ENCODE measurements at regions of chr2 and their contacts with region 1.

Region 1: DNA sequence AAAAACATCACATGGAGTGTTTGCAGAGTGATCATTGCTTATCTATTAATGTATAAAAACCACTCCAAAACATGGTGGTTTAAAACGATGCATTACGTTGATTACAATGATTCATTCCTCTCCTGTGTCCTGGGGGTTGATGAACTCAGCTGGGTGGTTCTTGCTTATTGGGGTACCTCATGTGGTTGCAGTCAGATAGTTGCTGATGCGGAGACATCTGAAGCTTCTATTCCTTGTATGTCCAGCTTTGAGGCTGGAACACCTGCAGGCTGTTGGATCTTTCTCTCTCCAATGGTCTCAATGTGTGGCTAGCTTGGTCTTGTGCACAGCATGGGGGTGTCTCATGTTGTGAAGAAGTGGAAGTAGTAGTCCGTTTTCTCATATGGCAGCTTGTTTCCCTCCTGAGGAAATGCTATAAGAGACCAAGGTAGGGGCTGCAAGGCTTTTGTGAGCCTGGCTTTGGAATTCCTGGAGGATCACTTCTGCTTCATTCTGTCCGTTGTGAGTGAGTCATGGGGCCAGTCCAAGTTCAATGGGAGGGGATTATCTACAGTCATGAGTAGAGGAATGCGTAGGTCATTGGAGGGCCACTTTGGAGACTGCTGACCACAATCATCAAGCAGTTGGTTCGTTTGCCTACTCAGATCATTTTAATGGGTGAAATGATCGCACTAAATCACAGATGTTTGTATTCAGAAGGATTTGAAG is 601.0 kb downstream of the SLC4A3 start:
- DNase-seq: peak; percentile 80 to 97
- H3K4me3 ChIP-seq: peak overlapping the region; percentile 45
- H3K27ac ChIP-seq: peak overlapping the region; percentile 90
- H3K4me1 ChIP-seq: peaks cover 67% of the 10 kb centered on the region
- H3K27me3 ChIP-seq: no peaks in the 10 kb centered on the region
- CTCF ChIP-seq: no peak

Region 2: DNA sequence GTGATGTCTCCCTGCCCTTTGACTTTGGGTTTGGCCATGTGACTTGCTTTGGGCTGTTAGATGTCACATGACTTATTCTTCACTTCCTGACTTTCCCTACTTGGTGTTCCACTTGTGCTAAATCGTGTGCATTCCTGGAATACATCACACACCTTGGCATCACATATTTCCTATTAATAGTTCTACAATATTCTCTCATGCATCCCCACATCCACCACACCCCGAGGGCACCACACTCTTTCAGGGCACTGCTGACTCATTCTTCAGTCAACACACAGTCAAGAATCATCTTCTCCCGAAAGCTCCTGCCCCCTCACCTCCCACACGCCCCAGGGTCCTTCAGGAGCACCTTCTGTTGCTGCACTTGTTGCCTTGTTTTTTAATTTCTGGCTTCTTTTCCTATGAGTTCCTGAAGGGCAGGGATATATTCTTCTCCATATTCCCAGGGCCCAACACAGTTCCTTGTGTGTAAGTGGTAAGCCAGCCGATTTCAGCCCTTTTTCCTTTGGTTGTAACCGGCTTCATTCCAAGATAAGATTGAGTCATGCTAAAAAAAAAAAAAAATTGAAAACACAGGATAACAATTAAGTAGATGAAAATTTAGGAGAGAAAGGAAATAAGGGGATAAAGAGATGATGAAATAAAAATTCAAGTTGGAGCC is 259.6 kb before region 1 on chr2:
- CTCF ChIA-PET with region 1: no interaction called
- POLR2A ChIA-PET with region 1: no interaction called
- intact Hi-C with region 1: loop called (anchors 1 kb)
- DNase-seq: peak; percentile 86 to 89
- H3K4me3 ChIP-seq: no peak overlapping the region
- H3K27ac ChIP-seq: peak overlapping the region; percentile 86
- H3K4me1 ChIP-seq: peaks cover 35% of the 10 kb centered on the region
- H3K27me3 ChIP-seq: no peaks in the 10 kb centered on the region
- CTCF ChIP-seq: no peak

Region 3: DNA sequence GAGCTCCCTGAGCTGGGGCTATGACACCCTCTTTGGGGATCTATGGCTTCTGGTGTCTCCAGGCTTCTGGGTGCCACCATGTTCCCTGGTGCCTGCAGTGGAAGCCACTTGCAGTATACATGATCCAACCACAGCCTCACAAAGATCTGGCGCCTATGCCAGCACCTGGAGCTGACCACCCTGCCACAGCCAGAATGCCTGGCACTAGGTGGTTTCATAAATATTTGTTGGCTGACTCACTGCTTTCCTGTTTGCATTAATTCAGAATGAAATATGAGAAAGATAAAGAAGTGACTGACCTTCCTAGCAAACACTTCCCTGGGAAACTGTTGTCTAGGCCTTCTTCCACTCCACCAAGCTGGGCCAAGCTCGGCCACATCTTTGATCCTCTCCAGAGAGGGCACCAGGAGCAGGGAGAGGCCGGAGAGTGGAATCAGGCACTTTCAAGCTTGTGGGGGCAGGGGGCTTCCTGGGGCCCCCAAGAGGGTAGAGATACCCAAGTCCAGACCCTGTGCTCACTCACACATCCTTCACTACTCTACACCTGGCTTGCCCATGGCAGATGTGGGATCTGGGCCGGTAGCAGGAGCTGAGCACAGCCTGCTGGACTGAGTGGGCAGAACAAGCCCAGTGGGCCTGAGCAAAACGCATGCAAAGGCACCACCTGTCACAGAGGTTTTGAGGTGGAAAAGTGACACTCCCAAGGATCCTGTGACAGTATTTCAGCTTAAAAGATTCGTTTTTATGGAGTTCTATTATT is 35.3 kb before region 1 on chr2:
- CTCF ChIA-PET with region 1: no interaction called
- POLR2A ChIA-PET with region 1: no interaction called
- intact Hi-C with region 1: loop called (anchors 2 kb)
- DNase-seq: peak; percentile 70 to 82
- H3K4me3 ChIP-seq: no peak overlapping the region
- H3K27ac ChIP-seq: peak overlapping the region; percentile 60
- H3K4me1 ChIP-seq: peaks cover 21% of the 10 kb centered on the region
- H3K27me3 ChIP-seq: no peaks in the 10 kb centered on the region
- CTCF ChIP-seq: no peak

Region 4: DNA sequence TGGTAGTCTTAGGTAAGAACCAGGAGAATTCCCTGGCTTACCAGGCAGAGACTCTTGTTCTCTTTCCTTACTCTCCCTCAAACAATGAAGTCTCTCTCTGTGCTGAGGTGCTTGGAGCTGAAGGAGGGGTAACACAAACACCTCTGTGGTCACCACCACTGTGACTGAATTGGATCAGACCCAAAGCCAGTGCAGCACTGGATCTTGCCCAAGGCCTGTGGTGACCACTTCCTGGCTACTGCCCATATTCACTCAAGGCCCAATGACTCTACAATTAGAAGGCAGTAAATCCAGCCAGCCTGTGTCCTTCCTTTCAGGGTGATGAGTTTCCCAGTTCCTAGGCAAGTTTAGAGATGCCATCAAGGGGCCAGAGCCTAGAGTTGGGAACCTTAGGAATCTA is 105.8 kb after region 1 on chr2:
- CTCF ChIA-PET with region 1: no interaction called
- POLR2A ChIA-PET with region 1: no interaction called
- intact Hi-C with region 1: loop called (anchors 2 kb)
- DNase-seq: peak in 1 of 2 experiments; percentile 50
- H3K4me3 ChIP-seq: no peak overlapping the region
- H3K27ac ChIP-seq: no peak overlapping the region
- H3K4me1 ChIP-seq: peaks cover 24% of the 10 kb centered on the region
- H3K27me3 ChIP-seq: no peaks in the 10 kb centered on the region
- CTCF ChIP-seq: no peak

Region 5: GRCh38 chr2:220478305-220479083 is 250.0 kb after region 1 on chr2:
- CTCF ChIA-PET with region 1: no interaction called
- POLR2A ChIA-PET with region 1: no interaction called
- intact Hi-C with region 1: no loop called
- DNase-seq: peak; percentile 1 to 84
- H3K4me3 ChIP-seq: no peak overlapping the region
- H3K27ac ChIP-seq: peak overlapping the region; percentile 33
- H3K4me1 ChIP-seq: peaks cover 16% of the 10 kb centered on the region
- H3K27me3 ChIP-seq: no peaks in the 10 kb centered on the region
- CTCF ChIP-seq: no peak

Region 6: DNA sequence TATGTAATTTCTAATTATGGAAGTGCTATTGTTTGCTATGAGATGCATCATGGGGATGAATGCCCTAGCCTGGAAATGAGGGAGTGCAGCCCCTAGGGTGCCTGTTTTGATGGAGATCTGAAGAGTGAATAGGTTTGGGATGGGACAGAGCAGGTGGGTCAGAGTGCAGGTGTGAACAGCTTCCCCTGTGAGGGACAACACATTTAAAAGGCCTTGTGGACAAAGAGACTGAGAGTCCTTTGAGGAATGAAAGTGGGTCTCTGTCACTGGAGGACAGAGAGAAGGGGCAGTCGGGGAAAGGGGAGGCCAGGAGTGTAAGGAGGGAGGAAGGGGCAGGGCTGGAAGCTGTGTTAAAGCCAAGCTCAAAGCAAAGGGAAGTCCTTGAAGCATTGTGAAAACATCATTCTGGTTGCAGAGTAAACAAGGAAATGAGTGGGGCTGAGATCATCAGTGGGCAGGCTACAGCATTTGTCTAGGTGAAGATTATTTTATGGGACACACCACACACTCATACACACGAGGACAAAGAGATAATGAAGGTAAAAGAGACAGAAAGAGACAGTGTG is 276.6 kb after region 1 on chr2:
- CTCF ChIA-PET with region 1: no interaction called
- POLR2A ChIA-PET with region 1: no interaction called
- intact Hi-C with region 1: loop called (anchors 2 kb)
- DNase-seq: peak; percentile 17 to 72
- H3K4me3 ChIP-seq: no peak overlapping the region
- H3K27ac ChIP-seq: peak overlapping the region; percentile 53
- H3K4me1 ChIP-seq: peaks cover 14% of the 10 kb centered on the region
- H3K27me3 ChIP-seq: no peaks in the 10 kb centered on the region
- CTCF ChIP-seq: no peak

Region 7: DNA sequence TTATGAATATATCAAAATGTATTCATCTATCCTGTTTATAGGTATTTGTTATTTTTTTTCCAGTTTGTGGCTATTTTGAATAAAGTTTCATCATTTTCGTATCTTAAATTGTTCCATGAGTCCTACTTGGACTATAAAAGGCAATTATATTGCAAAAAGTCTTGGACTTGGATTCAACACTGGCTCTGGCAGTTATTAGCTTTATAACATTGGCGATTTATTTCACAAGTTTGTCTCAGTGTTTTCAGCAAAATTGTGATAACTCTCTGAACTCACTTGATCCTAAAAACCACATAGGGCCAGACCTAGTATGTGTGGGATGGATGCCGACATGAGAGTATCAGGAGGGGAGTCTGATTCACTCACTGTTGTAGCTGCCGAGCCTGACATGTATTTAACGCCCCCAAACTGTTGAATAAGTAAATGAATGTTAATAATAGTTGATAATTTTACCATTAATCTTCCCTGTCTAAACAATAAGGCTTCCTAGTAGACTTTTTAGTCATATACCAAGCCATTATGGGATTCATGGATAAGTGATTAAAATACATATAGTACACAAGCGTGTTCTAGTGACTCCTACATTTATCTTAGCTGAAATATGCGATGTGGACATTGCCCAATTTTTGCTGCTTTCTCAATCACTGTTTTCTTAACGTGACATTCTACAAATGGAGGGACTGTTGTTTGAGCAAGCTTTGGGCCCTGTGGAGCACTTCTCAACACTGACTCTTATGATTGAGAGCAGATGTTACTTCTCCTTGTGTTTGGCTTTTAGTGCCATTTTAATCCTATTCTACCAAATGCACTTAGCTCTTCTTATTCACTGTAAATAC is 436.0 kb after region 1 on chr2:
- CTCF ChIA-PET with region 1: no interaction called
- POLR2A ChIA-PET with region 1: no interaction called
- intact Hi-C with region 1: loop called (anchors 1 kb)
- DNase-seq: no peak
- H3K4me3 ChIP-seq: no peak overlapping the region
- H3K27ac ChIP-seq: no peak overlapping the region
- H3K4me1 ChIP-seq: peaks cover 25% of the 10 kb centered on the region
- H3K27me3 ChIP-seq: no peaks in the 10 kb centered on the region
- CTCF ChIP-seq: no peak

Region 8: DNA sequence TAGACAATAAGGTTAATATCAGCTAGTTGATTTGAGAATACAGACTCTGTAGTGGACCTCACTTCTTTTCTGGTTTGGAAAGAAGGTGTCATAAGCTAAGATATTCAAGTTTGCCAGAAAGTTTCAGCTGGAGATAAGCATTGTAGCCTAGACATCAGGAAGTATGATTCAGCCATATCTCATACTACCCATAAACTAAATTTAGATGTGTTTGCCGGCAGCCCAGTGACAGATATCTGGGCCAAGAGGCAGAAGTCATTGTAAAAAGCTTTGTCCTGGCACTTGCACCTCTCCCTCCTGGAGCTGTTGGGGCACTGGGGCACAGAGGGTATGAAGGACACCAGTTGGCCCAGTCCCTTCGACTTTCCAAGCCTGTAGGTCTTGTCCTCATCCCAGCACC is 1215.7 kb after region 1 on chr2:
- CTCF ChIA-PET with region 1: no interaction called
- POLR2A ChIA-PET with region 1: no interaction called
- intact Hi-C with region 1: loop called (anchors 10 kb)
- DNase-seq: peak; percentile 65 to 97
- H3K4me3 ChIP-seq: peak overlapping the region; percentile 8; the same call in 1 of the 2 replicates
- H3K27ac ChIP-seq: peak overlapping the region; percentile 58
- H3K4me1 ChIP-seq: peaks cover 58% of the 10 kb centered on the region
- H3K27me3 ChIP-seq: no peaks in the 10 kb centered on the region
- CTCF ChIP-seq: no peak

Measured in PC-9 (cell line).